ENCODE measurements at regions of chr7 and their contacts with region 1.

Region 1: GRCh38 chr7:103065667-103066066 is 8.9 kb downstream of the FBXL13 start:
- DNase-seq: peak; percentile 24
- ATAC-seq: peak; percentile 80
- H3K4me3 ChIP-seq: no peak overlapping the region
- H3K27ac ChIP-seq: no peak overlapping the region
- H3K4me1 ChIP-seq: peaks cover 5 to 14% of the 10 kb centered on the region in 2 experiments; a peak in 3 of 4 replicates
- H3K27me3 ChIP-seq: no peaks in the 10 kb centered on the region
- CTCF ChIP-seq: peak; percentile 48 to 80 (median 65); a peak in 5 of 6 replicates
- POLR2A ChIP-seq: no peak
- RAD21 ChIP-seq: peak; percentile 69

Region 2: DNA sequence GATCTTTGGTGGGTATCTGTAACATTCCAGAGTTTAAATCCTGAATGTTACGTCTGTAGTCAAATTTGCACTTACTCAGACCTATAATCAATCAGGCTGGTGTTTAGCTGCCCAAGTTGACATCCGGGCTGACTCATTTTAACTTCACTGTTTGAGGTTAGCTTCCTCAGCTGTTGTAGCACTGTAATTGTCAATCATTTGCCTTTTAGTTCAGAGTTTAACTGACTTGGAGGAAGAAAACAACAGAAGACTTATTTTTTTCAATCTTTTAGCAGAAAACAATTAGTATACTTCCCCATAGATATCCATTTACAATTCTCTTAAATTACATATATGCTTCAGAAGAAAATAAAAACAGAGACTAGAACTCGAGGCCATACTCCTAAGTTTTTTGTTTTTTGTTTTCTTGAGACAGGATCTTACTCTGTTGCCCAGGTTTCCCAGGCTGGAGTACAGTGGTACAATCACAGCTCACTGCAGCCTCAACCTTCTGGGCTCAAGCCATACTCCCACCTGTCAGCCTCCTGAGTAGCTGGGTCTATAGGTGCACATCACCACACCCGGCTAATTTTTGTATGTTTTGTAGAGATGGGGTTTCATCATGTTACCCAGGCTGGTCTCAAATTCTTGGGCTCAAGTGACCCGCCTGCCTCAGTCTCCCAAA is 191.4 kb before region 1 on chr7:
- CTCF ChIA-PET with region 1: interaction called, 19 read pairs
- POLR2A ChIA-PET with region 1: no interaction called
- RAD21 ChIA-PET with region 1: no interaction called
- intact Hi-C with region 1: no loop called
- DNase-seq: peak; percentile 65
- ATAC-seq: peak; percentile 54
- H3K4me3 ChIP-seq: 0 out of 4 replicates have a peak overlapping the region, but pooled peaks of 1 of the 2 experiments have one; percentile 6
- H3K27ac ChIP-seq: no peak overlapping the region; the same call in 1 of the 2 replicates
- H3K4me1 ChIP-seq: peaks cover 32 to 52% of the 10 kb centered on the region in 2 experiments
- H3K27me3 ChIP-seq: no peaks in the 10 kb centered on the region
- CTCF ChIP-seq: no peak
- POLR2A ChIP-seq: no peak
- RAD21 ChIP-seq: 0 out of 2 replicates have a peak, but pooled peaks have one; percentile 12

Region 3: GRCh38 chr7:102916426-102916825 is 149.2 kb before region 1 on chr7:
- CTCF ChIA-PET with region 1: interaction called, 6 read pairs
- POLR2A ChIA-PET with region 1: no interaction called
- RAD21 ChIA-PET with region 1: interaction called, 5 to 8 read pairs
- intact Hi-C with region 1: loop called (anchors 5 kb)
- DNase-seq: no peak
- ATAC-seq: no peak
- H3K4me3 ChIP-seq: no peak overlapping the region
- H3K27ac ChIP-seq: no peak overlapping the region
- H3K4me1 ChIP-seq: peaks cover 0 to 15% of the 10 kb centered on the region in 2 experiments; a peak in 2 of 4 replicates
- H3K27me3 ChIP-seq: no peaks in the 10 kb centered on the region
- CTCF ChIP-seq: no peak
- POLR2A ChIP-seq: no peak
- RAD21 ChIP-seq: no peak

Region 4: DNA sequence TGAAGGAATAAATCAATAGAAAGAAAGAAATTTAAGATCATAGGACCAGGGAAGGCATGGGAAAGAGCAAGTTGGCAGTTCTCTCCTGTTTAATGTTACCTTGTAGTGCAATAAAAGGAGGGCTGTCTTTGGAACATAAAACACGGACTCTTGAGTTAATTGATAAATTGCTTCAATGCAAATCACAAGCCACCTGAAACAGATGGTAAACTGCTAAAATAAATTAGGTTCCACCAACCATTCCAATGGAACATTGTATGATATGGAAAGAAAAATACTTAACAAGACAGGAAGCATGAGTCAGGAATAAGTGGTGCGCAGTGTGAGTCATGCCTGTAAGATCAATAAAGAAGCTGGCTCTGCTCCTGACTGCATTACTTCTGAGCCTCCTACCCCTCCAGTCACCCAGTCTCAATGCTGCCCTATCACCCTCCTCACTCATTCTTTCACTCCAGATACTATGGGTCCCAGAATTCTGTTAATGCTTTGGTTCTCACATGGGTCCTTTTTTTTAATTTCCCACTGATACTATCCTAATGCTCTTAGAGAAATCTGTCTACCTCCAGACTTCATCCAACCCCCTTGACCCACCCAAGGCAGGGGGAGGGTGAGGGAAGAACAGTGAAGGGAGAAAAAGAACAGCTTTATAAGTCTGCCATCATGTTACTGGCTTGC is 74.0 kb before region 1 on chr7:
- CTCF ChIA-PET with region 1: interaction called, 10 read pairs
- POLR2A ChIA-PET with region 1: no interaction called
- RAD21 ChIA-PET with region 1: interaction called, 5 to 13 read pairs
- intact Hi-C with region 1: no loop called
- DNase-seq: peak; percentile 96
- ATAC-seq: peak; percentile 86
- H3K4me3 ChIP-seq: peak overlapping the region in 1 of 2 experiments; percentile 28; a peak in 2 of 4 replicates
- H3K27ac ChIP-seq: peak overlapping the region; percentile 94
- H3K4me1 ChIP-seq: peaks cover 40 to 42% of the 10 kb centered on the region in 2 experiments
- H3K27me3 ChIP-seq: no peaks in the 10 kb centered on the region
- CTCF ChIP-seq: no peak
- POLR2A ChIP-seq: no peak
- RAD21 ChIP-seq: peak; percentile 26

Region 5: GRCh38 chr7:103106005-103106702 is 40.5 kb after region 1 on chr7:
- CTCF ChIA-PET with region 1: no interaction called
- POLR2A ChIA-PET with region 1: no interaction called
- RAD21 ChIA-PET with region 1: no interaction called
- intact Hi-C with region 1: no loop called
- DNase-seq: no peak
- ATAC-seq: no peak
- H3K4me3 ChIP-seq: no peak overlapping the region
- H3K27ac ChIP-seq: no peak overlapping the region
- H3K4me1 ChIP-seq: no peaks in the 10 kb centered on the region
- H3K27me3 ChIP-seq: no peaks in the 10 kb centered on the region
- CTCF ChIP-seq: no peak
- POLR2A ChIP-seq: no peak
- RAD21 ChIP-seq: no peak

Region 6: GRCh38 chr7:103679151-103680132 is 613.8 kb after region 1 on chr7:
- CTCF ChIA-PET with region 1: no interaction called
- POLR2A ChIA-PET with region 1: no interaction called
- RAD21 ChIA-PET with region 1: no interaction called
- intact Hi-C with region 1: no loop called
- DNase-seq: no peak
- ATAC-seq: no peak
- H3K4me3 ChIP-seq: no peak overlapping the region
- H3K27ac ChIP-seq: no peak overlapping the region
- H3K4me1 ChIP-seq: no peaks in the 10 kb centered on the region
- H3K27me3 ChIP-seq: peaks cover 20% of the 10 kb centered on the region
- CTCF ChIP-seq: no peak
- POLR2A ChIP-seq: no peak
- RAD21 ChIP-seq: no peak

Measured in HCT116 (cell line).